ENCODE measurements at regions of chr11 and their contacts with region 1.

Region 1: DNA sequence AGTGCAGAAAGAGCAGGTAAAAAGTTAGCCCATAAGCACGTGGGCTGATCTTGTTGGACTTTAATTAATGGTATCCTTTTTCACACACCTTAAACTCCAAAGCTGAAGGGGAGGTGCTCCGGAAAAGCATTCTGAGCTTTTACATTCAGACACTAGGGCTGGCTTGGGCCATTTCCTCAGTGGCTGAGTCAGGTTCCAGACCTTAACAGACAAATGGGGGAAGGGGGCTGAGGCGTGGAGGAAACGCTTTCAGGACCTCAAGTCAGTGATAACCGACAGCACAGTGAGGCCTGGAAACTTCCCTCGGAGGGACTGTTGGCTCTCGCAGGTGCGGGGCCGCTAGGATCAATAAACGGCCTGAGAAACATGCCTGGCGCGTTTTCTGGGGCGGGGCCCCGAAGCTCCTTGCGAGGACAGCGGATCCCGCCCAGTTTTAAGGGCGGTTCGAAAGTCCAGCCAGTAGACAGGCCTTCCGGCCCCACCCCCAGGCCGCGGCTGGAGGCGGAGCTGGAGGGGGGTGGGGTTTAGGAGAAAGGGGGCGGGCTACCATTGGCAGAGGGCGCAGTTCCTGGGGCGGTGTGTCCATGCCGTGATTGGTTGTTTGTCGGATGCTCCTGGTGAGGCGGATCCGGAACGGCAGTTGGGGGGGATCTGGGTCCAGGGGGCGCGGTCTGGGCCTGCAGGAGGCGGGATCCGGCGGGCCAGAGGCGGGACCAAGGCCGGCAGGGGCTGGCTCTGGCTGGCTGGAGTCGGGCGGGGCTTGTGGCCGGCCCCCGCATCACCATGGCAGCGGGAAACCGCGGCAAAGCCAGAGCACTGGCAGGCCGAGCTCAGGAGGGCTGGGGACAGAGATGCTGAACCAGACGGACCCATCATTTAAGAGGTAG is 8.0 kb downstream of the C11orf52 start:
- DNase-seq: peak; percentile 93
- H3K4me3 Mint-ChIP-seq: peak overlapping the region; percentile 82
- H3K27ac Mint-ChIP-seq: peak overlapping the region; percentile 89
- H3K4me1 Mint-ChIP-seq: peaks cover 17% of the 10 kb centered on the region
- H3K27me3 Mint-ChIP-seq: peaks cover 18% of the 10 kb centered on the region

Region 2: DNA sequence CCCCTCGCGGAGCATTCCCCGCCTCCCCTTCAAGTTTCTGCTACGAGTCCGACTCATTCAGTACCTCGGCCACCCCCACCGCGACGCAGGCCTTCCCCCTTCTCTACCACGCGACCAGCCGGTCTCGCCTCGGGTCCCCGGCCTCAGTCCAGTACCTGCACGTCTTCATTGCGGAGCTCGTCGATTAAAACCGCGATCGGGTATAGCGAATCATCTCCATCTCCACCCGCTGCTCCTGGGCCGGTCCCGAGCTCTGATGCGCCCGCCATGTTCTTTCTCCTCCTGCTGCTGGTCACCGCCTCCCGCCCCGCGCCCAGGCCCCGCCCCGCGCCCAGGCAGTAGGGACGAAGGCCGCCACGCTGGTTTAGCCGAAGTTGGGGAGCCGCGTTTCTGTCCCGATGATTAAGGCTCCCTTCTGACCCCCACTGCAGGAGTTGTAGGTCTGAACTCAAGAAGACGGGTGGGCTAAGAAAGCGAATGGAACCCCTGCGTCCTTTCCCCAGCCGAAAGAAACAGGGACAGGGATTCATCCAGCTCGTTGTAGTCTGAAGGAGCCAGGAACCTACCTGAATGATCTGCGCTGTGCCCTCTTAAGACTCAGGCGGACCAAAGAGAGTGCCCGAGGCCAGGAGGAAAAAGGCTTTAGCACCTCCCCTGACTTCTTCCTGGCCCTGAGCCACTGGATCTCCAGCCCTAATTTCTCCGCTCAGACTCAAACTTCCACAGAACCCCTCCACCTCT is 160.5 kb before region 1 on chr11 and contains the start of gene PPP2R1B:
- intact Hi-C with region 1: loop called (anchors 1 kb)
- DNase-seq: peak; percentile 60
- H3K4me3 Mint-ChIP-seq: peak within 1 kb of the TSS; percentile 96
- H3K27ac Mint-ChIP-seq: peak within 1 kb of the TSS; percentile 97
- H3K4me1 Mint-ChIP-seq: peaks cover 43% of the 10 kb centered on the region
- H3K27me3 Mint-ChIP-seq: no peaks in the 10 kb centered on the region
- total RNA-seq, gene PPP2R1B: 58.1 and 61.4 TPM in 2 replicates

Region 3: DNA sequence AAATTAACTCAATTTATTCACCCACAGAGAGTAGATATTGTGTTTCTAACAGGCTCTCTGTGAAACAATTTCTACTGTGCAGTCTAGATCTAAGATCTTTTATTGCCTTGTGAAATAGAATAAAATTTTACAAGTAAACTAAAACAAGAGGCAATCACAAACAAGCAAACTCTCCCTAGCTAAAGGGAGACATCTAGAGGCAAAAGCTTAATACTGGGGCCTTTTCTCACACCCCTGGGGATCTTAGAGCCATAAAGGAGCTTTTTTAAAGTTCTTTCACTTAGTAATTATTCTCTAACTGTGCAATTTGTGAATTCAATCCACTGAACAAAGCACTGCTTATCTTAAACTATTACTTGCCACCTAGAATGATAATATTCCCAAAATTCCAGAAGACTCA is 75.1 kb before region 1 on chr11:
- intact Hi-C with region 1: no loop called
- DNase-seq: no peak
- H3K4me3 Mint-ChIP-seq: no peak overlapping the region
- H3K27ac Mint-ChIP-seq: no peak overlapping the region
- H3K4me1 Mint-ChIP-seq: no peaks in the 10 kb centered on the region
- H3K27me3 Mint-ChIP-seq: no peaks in the 10 kb centered on the region

Region 4: GRCh38 chr11:111878849-111879636 is 47.7 kb before region 1 on chr11 and contains the starts of genes CFAP68 and FDXACB1:
- intact Hi-C with region 1: loop called (anchors 1 kb)
- DNase-seq: peak; percentile 92
- H3K4me3 Mint-ChIP-seq: peak within 1 kb of the TSS; percentile 94
- H3K27ac Mint-ChIP-seq: peak within 1 kb of the TSS; percentile 100
- H3K4me1 Mint-ChIP-seq: peaks cover 26% of the 10 kb centered on the region
- H3K27me3 Mint-ChIP-seq: peaks cover 2% of the 10 kb centered on the region
- total RNA-seq, gene CFAP68: 17.7 and 22.3 TPM in 2 replicates
- total RNA-seq, gene FDXACB1: 7.9 and 9.4 TPM in 2 replicates

Region 5: DNA sequence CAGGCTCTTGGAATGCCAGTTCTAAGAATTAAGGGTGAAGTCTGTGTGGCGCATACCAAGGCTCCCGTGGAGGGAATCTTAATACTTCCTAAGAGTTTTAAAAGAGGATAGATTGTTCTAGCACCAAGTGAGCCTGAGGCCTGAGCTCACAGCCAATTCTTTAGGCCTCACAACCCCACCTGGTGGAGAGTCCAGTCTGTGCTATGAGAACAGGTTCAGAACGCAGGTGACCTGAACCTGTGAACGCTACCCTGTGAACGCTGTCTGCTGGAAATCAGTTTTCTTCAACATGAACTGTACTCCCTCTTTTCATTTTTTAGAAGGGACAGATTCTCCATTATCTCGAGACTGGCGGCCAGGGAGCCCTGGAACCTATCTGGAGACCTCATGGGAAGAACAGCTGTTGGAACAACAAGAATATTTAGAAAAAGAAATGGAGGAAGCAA is 55.3 kb after region 1 on chr11:
- intact Hi-C with region 1: loop called (anchors 1 kb)
- DNase-seq: peak; percentile 34
- H3K4me3 Mint-ChIP-seq: no peak overlapping the region
- H3K27ac Mint-ChIP-seq: no peak overlapping the region
- H3K4me1 Mint-ChIP-seq: peaks cover 9% of the 10 kb centered on the region
- H3K27me3 Mint-ChIP-seq: peaks cover 6% of the 10 kb centered on the region

Region 6: GRCh38 chr11:112074026-112074811 is 147.5 kb after region 1 on chr11 and contains the start of gene NKAPD1:
- intact Hi-C with region 1: loop called (anchors 2 kb)
- DNase-seq: peak; percentile 77
- H3K4me3 Mint-ChIP-seq: peak within 1 kb of the TSS; percentile 94
- H3K27ac Mint-ChIP-seq: peak within 1 kb of the TSS; percentile 95
- H3K4me1 Mint-ChIP-seq: peaks cover 39% of the 10 kb centered on the region
- H3K27me3 Mint-ChIP-seq: no peaks in the 10 kb centered on the region
- total RNA-seq, gene NKAPD1: 29.1 and 33.0 TPM in 2 replicates

Region 7: GRCh38 chr11:112174789-112175598 is 248.2 kb after region 1 on chr11 and contains the start of gene BCO2:
- intact Hi-C with region 1: loop called (anchors 5 kb)
- DNase-seq: peak; percentile 14
- H3K4me3 Mint-ChIP-seq: peak within 1 kb of the TSS; percentile 38
- H3K27ac Mint-ChIP-seq: peak within 1 kb of the TSS; percentile 72
- H3K4me1 Mint-ChIP-seq: peaks cover 13% of the 10 kb centered on the region
- H3K27me3 Mint-ChIP-seq: peaks cover 15% of the 10 kb centered on the region
- total RNA-seq, gene BCO2: 0.49 and 1.6 TPM in 2 replicates

Region 8: GRCh38 chr11:113314389-113315301 is 1387.9 kb after region 1 on chr11 and contains the start of gene TTC12:
- intact Hi-C with region 1: loop called (anchors 5 kb)
- DNase-seq: peak; percentile 89
- H3K4me3 Mint-ChIP-seq: peak within 1 kb of the TSS; percentile 81
- H3K27ac Mint-ChIP-seq: peak within 1 kb of the TSS; percentile 70
- H3K4me1 Mint-ChIP-seq: peaks cover 20% of the 10 kb centered on the region
- H3K27me3 Mint-ChIP-seq: no peaks in the 10 kb centered on the region
- total RNA-seq, gene TTC12: 7.4 and 8.5 TPM in 2 replicates